WTC11 (cell line): ENCODE measurements at regions of chr9 and their contacts with region 1.

Region 1: DNA sequence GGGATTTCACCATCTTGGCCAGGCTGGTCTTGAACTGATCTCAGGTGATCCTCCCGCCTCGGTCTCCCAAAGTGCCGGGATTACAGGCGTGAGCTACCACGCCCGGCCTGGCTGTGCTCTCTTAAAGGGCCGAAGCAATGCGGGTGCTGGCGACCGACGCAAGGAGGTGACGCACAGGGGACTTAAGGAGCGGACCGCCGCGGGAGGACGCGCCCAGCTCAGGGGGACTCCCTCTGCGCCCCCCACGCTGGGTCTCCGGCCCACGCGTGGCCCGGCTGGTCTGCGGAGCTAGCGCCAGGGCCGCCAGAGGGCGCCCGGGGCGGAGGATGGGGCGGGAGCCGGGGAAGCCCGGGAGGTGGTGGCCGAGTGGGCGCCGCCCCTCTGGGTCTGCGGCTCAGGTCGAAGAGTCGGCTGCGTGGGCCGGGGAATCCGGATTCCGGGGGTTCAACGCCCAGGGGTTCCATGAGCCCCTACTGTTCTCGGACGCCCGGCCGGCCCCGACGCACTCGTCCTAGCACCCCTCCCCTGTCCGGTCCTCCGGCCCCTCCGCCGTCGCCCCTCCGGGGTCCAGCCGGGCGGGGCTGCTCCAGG is 502 bp upstream of the CERCAM start:
- DNase-seq: peak; percentile 63
- ATAC-seq: peak; percentile 55
- H3K4me3 Mint-ChIP-seq: peak overlapping the region; percentile 67
- H3K27ac Mint-ChIP-seq: no peak overlapping the region
- H3K4me1 Mint-ChIP-seq: peaks cover 27% of the 10 kb centered on the region
- H3K27me3 Mint-ChIP-seq: peaks cover 51% of the 10 kb centered on the region
- CTCF ChIP-seq: peak; percentile 42

Region 2: DNA sequence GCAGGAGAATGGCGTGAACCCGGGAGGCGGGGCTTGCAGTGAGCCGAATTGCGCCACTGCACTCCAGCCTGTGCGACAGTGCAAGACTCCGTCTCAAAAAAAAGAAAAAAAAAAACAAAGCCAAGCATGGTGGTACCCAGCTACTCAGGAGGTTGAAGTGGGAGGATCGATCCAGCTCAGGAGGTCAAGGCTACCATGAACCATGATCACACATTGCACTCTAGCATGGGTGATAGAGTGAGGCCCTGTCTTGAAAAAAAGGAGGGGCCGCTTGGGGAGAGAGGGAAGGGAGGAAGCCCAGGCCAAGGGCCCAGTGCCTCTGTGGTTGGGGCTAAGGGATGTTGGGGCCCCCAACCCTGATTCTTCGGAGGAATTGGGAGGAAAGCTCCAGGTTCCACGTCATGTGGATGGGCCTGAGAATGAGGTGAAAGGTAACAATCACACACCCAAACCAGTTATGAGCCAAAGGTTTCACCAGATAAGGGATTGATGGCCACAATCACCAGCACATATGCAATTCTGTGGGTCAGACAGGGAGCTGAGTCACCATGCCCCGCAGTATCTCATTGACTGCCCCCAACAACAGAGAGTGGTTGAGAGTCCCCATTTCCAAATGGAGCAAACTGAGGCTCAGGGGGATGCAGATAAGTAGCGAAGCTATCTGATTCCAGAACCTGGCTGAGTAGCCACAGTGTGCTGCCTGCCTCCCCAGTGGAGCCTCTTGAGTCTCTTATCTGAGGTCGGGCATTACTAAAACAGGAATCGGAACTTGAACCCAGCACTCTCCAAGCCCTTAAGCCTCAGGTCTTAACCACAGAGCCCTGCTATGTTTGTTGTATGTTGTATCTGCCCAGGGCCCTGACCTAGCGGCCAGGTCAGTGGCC is 123.6 kb before region 1 on chr9:
- CTCF ChIA-PET with region 1: interaction called, 17 read pairs
- POLR2A ChIA-PET with region 1: no interaction called
- DNase-seq: no peak
- ATAC-seq: no peak
- H3K4me3 Mint-ChIP-seq: no peak overlapping the region
- H3K27ac Mint-ChIP-seq: peak overlapping the region; percentile 23; the same call in 1 of the 2 replicates
- H3K4me1 Mint-ChIP-seq: no peaks in the 10 kb centered on the region
- H3K27me3 Mint-ChIP-seq: peaks cover 2% of the 10 kb centered on the region; the same call in 1 of the 2 replicates
- CTCF ChIP-seq: no peak

Region 3: DNA sequence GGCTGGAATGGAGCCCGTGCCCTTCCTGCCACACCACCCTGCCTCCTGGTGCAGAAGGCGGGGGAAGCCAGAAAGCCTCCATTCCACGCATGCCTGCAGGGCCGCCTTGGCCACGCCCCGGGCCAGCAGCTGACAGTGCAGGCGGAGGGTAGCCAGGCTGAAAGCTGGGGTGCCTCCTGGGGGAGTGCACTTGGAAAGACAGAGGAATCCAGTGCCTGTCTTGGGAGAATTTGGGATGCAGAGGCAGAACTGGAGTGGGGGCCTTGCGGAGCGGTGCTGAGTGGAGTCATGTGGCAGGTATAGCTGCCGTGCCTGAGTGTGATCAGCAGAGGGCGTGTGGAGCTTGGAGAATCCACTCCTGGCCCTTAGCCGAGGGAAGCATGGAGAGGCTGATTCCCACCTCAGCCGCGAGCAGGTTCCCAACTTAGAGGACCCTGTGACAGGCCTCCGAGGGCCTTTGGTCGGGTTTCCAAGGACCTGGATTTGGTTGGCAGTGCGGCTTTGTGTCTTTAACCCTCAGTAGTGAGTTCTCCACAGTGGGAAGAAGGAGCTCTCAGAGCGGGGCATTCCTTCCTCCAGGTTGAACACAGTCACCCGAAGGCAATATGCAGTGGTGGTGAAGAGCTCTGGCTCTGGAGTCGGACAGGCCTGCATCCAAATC is 58.0 kb before region 1 on chr9:
- CTCF ChIA-PET with region 1: interaction called, 248 read pairs
- POLR2A ChIA-PET with region 1: no interaction called
- DNase-seq: peak; percentile 88
- ATAC-seq: peak; percentile 66
- H3K4me3 Mint-ChIP-seq: peak overlapping the region; percentile 43
- H3K27ac Mint-ChIP-seq: no peak overlapping the region
- H3K4me1 Mint-ChIP-seq: peaks cover 40% of the 10 kb centered on the region
- H3K27me3 Mint-ChIP-seq: peaks cover 57% of the 10 kb centered on the region
- CTCF ChIP-seq: peak; percentile 85

Region 4: GRCh38 chr9:128370826-128371621 is 49.1 kb before region 1 on chr9 and contains the start of gene URM1:
- CTCF ChIA-PET with region 1: interaction called, 248 read pairs
- POLR2A ChIA-PET with region 1: no interaction called
- DNase-seq: peak; percentile 92
- ATAC-seq: peak; percentile 89
- H3K4me3 Mint-ChIP-seq: peak within 1 kb of the TSS; percentile 95
- H3K27ac Mint-ChIP-seq: peak within 1 kb of the TSS; percentile 80
- H3K4me1 Mint-ChIP-seq: peaks cover 26% of the 10 kb centered on the region
- H3K27me3 Mint-ChIP-seq: peaks cover 35% of the 10 kb centered on the region
- CTCF ChIP-seq: no peak
- total RNA-seq, gene URM1: 52.0 to 67.9 TPM (median 54.3 TPM) in 3 replicates

Region 5: GRCh38 chr9:128383007-128383753 is 37.0 kb before region 1 on chr9:
- CTCF ChIA-PET with region 1: interaction called, 38 read pairs
- POLR2A ChIA-PET with region 1: interaction called, 3 read pairs
- DNase-seq: peak; percentile 69
- ATAC-seq: peak; percentile 83
- H3K4me3 Mint-ChIP-seq: peak overlapping the region; percentile 28
- H3K27ac Mint-ChIP-seq: no peak overlapping the region
- H3K4me1 Mint-ChIP-seq: peaks cover 56% of the 10 kb centered on the region
- H3K27me3 Mint-ChIP-seq: peaks cover 84% of the 10 kb centered on the region
- CTCF ChIP-seq: no peak

Region 6: GRCh38 chr9:128389395-128390149 is 30.6 kb before region 1 on chr9:
- CTCF ChIA-PET with region 1: interaction called, 38 read pairs
- POLR2A ChIA-PET with region 1: interaction called, 3 read pairs
- DNase-seq: peak; percentile 33
- ATAC-seq: peak; percentile 5; the same call in 1 of the 2 replicates
- H3K4me3 Mint-ChIP-seq: no peak overlapping the region
- H3K27ac Mint-ChIP-seq: no peak overlapping the region
- H3K4me1 Mint-ChIP-seq: peaks cover 65% of the 10 kb centered on the region
- H3K27me3 Mint-ChIP-seq: peaks cover 97% of the 10 kb centered on the region
- CTCF ChIP-seq: no peak

Region 7: DNA sequence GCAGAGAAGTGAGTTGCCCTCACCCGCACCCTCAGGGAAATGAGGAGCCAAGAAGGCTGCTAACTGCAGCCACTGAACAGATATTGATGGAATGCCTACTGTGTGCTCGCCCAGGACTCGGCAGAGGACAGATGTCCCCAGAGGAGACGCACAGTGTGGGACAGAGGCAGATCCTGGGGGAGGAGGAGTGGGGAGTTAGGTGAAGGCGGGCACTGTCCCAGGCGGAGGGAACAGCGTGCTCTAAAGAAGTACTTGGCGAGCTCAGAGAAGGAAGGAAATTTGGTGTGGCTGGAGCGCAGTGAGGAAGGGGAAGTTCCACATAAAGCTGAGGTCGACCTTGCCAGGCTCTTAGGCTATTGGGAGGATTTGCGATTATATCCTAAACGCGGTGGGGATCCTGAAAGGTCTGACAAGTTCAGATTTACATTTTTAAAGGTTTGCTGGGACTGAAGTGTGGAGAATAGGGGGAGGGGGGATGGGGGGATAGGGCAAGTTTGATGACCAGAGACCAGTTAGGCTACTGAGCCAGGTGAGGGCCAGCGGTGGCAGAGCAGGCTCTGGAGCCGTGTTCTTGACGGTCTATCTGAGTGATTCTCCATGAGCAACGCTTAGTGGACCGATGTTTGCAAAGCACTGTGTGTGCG is 23.1 kb before region 1 on chr9:
- CTCF ChIA-PET with region 1: interaction called, 19 read pairs
- POLR2A ChIA-PET with region 1: no interaction called
- DNase-seq: peak; percentile 39
- ATAC-seq: peak; percentile 41
- H3K4me3 Mint-ChIP-seq: no peak overlapping the region; the same call in 1 of the 2 replicates
- H3K27ac Mint-ChIP-seq: no peak overlapping the region
- H3K4me1 Mint-ChIP-seq: peaks cover 33% of the 10 kb centered on the region
- H3K27me3 Mint-ChIP-seq: peaks cover 97% of the 10 kb centered on the region
- CTCF ChIP-seq: no peak